ENCODE measurements at regions of chr3 and their contacts with region 1.

Region 1: DNA sequence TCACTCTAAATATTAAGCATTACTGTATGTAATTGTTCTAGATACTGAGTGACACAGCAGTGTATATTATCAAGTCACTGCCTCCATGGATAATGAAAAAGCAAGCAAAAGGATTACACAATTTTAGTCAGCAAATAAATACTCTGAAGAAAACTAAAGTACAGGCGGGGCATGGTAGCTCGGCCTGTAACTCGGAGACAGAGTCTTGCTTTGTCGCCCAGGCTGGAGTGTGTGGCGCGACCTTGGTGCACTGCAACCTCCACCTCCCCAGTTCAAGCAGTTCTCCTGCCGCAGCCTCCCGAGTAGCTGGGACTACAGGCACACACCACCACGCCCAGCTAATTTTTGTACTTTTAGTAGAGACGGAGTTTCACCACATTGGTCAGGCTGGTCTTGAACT is 32.7 kb downstream of the RBM6 start:
- DNase-seq: no peak
- H3K4me3 ChIP-seq: no peak overlapping the region
- H3K27ac ChIP-seq: peak overlapping the region; percentile 70
- H3K27me3 ChIP-seq: no peaks in the 10 kb centered on the region
- CTCF ChIP-seq: no peak

Region 2: DNA sequence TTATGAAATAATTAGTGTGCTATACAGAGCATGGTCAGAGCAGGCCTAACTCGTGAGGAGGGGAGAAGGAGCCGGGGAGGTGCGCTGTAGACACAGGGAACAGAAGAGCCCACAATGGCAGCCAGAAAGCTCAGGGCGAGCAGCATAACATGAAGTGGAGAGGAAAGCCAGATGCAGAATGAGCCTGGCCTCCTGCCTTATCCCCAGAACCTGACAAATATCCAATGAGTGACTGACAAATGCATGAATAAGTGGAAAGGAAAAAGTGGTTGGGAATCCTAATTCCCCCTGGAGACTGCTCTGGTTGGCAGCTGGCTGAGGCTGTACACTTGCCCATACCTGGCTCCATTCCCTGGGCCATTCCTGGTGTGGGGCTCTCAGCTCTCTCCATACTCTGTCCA is 59.8 kb before region 1 on chr3:
- CTCF ChIA-PET with region 1: no interaction called
- POLR2A ChIA-PET with region 1: no interaction called
- DNase-seq: no peak
- H3K4me3 ChIP-seq: no peak overlapping the region
- H3K27ac ChIP-seq: no peak overlapping the region
- H3K27me3 ChIP-seq: no peaks in the 10 kb centered on the region
- CTCF ChIP-seq: no peak

Region 3: DNA sequence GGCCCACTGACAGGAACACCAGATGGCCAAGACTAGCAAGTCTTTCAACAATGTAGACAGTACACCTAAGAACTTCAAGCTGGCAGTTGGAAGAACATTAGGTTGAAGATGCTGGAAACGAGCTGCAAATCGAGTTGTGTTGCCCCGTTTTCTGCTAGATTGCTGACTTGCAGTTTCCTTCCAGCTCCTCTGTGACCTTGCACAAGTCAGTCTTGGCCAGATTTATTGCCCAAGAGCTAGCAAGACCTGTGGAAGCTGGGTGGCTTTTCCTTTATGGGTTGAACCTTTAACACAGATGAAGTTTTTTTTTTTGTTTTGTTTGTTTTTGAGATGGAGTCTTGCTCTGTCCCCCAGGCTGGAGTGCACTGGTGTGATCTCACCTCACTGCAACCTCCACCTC is 35.6 kb before region 1 on chr3:
- CTCF ChIA-PET with region 1: no interaction called
- POLR2A ChIA-PET with region 1: no interaction called
- DNase-seq: no peak
- H3K4me3 ChIP-seq: no peak overlapping the region
- H3K27ac ChIP-seq: no peak overlapping the region
- H3K27me3 ChIP-seq: no peaks in the 10 kb centered on the region
- CTCF ChIP-seq: no peak

Region 4: DNA sequence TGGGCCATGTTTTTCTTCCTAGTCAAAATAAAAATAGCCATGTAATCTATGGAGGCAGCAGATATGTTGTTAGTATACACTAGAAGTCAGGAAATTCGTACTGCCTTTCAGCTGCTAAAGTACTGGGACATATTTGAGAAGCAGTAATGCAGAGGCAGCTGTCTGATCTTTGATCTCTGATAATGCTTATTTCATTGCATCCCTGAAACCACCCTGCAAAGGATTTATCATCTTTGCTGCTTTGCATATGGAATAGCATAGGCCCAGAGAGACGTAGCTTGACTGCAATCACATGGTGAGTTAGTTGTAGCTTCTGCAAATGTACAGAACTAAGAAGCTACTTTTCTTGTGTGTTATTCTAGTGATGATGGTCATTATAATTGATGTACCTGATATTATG is 19.7 kb after region 1 on chr3:
- CTCF ChIA-PET with region 1: no interaction called
- POLR2A ChIA-PET with region 1: no interaction called
- DNase-seq: no peak
- H3K4me3 ChIP-seq: no peak overlapping the region
- H3K27ac ChIP-seq: no peak overlapping the region
- H3K27me3 ChIP-seq: no peaks in the 10 kb centered on the region
- CTCF ChIP-seq: no peak

Region 5: GRCh38 chr3:50015918-50016317 is 43.3 kb after region 1 on chr3:
- CTCF ChIA-PET with region 1: no interaction called
- POLR2A ChIA-PET with region 1: interaction called, 13 read pairs
- DNase-seq: no peak
- H3K4me3 ChIP-seq: no peak overlapping the region
- H3K27ac ChIP-seq: no peak overlapping the region
- H3K27me3 ChIP-seq: no peaks in the 10 kb centered on the region
- CTCF ChIP-seq: no peak

Region 6: GRCh38 chr3:50078622-50079021 is 106.0 kb after region 1 on chr3:
- CTCF ChIA-PET with region 1: no interaction called
- POLR2A ChIA-PET with region 1: no interaction called
- DNase-seq: no peak
- H3K4me3 ChIP-seq: no peak overlapping the region
- H3K27ac ChIP-seq: no peak overlapping the region
- H3K27me3 ChIP-seq: no peaks in the 10 kb centered on the region
- CTCF ChIP-seq: no peak

Measured in AG04450 (cell line).